Natural killer cell (primary cell): ENCODE measurements at regions of chr20 and their contacts with region 1.

Region 1: GRCh38 chr20:18566892-18567742 is at the start of gene SMIM26:
- DNase-seq: peak; percentile 90 to 97
- ATAC-seq: peak; percentile 98 to 99 (median 99)
- H3K4me3 ChIP-seq: peak within 1 kb of the TSS; percentile 59
- H3K4me3 Mint-ChIP-seq: peak within 1 kb of the TSS; percentile 98
- H3K27ac ChIP-seq: peak within 1 kb of the TSS; percentile 81
- H3K27ac Mint-ChIP-seq: peak within 1 kb of the TSS; percentile 94 to 97
- H3K4me1 ChIP-seq: peaks cover 11% of the 10 kb centered on the region
- H3K4me1 Mint-ChIP-seq: peaks cover 15 to 29% of the 10 kb centered on the region in 2 donors
- H3K27me3 ChIP-seq: no peaks in the 10 kb centered on the region
- H3K27me3 Mint-ChIP-seq: no peaks in the 10 kb centered on the region
- CTCF ChIP-seq: no peak
- total RNA-seq, gene SMIM26: 38.6 to 48.8 (median 40.5) TPM

Region 2: GRCh38 chr20:16671753-16672152 is 1895.4 kb before region 1 on chr20:
- intact Hi-C with region 1: no loop called
- DNase-seq: no peak
- ATAC-seq: no peak
- H3K4me3 ChIP-seq: no peak overlapping the region
- H3K4me3 Mint-ChIP-seq: no peak overlapping the region
- H3K27ac ChIP-seq: no peak overlapping the region
- H3K27ac Mint-ChIP-seq: no peak overlapping the region
- H3K4me1 ChIP-seq: no peaks in the 10 kb centered on the region
- H3K4me1 Mint-ChIP-seq: no peaks in the 10 kb centered on the region
- H3K27me3 ChIP-seq: no peaks in the 10 kb centered on the region
- H3K27me3 Mint-ChIP-seq: peaks cover 0 to 6% of the 10 kb centered on the region in 2 donors
- CTCF ChIP-seq: no peak

Region 3: DNA sequence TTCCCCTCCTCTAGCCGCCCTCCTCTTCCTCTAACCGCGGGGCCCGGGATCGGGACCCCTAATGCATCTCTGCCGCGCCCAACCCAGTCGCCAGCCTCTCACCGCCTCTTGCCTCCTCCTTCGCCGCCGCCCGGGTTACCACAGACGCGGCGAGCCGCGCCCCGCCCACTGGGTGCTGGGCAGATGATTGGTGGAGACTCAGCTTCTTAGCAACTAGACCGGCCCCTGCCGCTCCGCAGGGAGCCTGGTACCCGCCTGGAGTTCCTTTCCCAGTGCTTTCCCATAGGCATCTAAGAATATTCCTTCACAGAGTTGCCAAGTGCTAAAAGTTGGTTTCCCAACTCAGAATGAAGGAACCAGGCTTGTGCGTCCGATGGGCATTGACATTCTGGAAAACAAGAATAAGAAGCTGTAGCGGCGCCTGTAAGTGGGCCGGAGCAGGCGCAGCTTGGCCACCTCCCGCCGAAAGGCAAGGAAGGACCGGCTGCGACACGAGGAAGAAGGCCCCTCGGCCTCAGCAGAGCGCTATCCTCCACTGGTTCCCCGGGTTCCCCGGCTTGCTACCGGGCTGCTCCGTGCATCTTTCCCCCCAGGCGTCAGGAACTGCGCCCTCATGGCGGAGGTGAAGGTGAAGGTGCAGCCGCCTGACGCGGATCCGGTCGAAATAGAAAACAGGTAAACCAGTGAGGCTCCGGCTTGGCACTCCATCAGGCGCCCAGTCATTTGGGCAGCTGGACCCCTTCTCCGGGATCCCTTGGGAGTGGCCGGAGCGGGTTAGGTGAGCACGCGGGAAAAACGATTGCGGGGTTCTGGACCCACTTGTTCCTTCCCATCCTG is 100.0 kb before region 1 on chr20 and contains the starts of genes DZANK1 and POLR3F:
- intact Hi-C with region 1: loop called (anchors 1 kb)
- DNase-seq: peak; percentile 87 to 94
- ATAC-seq: peak; percentile 92 to 95 (median 94)
- H3K4me3 ChIP-seq: peak within 1 kb of the TSS; percentile 70
- H3K4me3 Mint-ChIP-seq: peak within 1 kb of the TSS; percentile 97
- H3K27ac ChIP-seq: peak within 1 kb of the TSS; percentile 84
- H3K27ac Mint-ChIP-seq: peak within 1 kb of the TSS; percentile 95 to 97
- H3K4me1 ChIP-seq: peaks cover 16% of the 10 kb centered on the region
- H3K4me1 Mint-ChIP-seq: peaks cover 21 to 28% of the 10 kb centered on the region in 2 donors
- H3K27me3 ChIP-seq: no peaks in the 10 kb centered on the region
- H3K27me3 Mint-ChIP-seq: no peaks in the 10 kb centered on the region
- CTCF ChIP-seq: no peak
- total RNA-seq, gene DZANK1: 2.7 to 5.7 (median 3.7) TPM
- total RNA-seq, gene POLR3F: 8.5 to 10.6 (median 8.8) TPM

Region 4: DNA sequence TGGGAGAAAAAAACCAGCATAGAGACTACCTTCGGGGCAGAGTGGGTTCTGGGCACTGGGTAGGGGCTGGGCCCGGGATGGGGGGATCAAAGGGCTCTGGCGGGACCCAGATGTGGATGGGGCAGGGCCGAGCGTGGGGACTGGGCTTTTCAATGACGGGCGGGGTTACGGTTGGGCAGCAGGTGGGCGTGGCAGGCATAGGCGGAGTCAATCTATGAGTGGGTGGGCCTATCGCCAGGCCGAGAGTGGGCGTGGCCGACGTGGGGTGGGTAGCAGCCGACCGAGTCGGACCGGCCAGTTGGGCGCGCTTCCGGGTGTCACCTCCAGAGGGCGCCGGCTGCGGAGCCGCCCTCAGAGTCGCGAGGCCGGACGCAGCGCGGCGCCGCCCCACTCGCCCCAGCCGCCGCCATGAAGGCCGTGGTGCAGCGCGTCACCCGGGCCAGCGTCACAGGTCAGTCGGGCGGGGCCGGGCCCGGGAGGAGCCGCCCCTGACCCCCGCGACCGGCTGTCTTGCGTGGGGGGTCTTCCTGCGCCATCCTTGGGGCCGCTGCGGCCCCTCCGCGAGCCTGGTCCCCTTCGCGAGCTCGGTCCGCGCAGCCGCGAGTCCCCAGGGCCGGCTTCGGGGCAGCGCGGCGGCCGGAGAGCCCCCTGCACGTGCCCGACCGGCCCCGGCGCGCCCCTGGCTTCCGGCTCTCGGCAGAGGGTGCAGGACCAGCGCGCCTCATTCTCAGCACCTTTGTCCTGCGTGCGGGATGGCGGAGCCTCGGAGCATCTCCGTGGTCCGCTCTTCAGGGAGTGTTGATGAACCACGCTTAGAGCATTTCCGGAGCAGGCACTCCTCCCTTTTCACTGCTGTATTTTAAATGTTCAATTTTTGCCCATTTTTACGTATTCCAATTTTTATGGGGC is 20.8 kb after region 1 on chr20 and contains the start of gene DTD1:
- intact Hi-C with region 1: loop called (anchors 1 kb)
- DNase-seq: peak; percentile 85 to 86
- ATAC-seq: peak; percentile 87 to 95 (median 88)
- H3K4me3 ChIP-seq: peak within 1 kb of the TSS; percentile 71
- H3K4me3 Mint-ChIP-seq: peak within 1 kb of the TSS; percentile 90
- H3K27ac ChIP-seq: peak within 1 kb of the TSS; percentile 54
- H3K27ac Mint-ChIP-seq: peak within 1 kb of the TSS; percentile 84 to 87
- H3K4me1 ChIP-seq: peaks cover 14% of the 10 kb centered on the region
- H3K4me1 Mint-ChIP-seq: peaks cover 25 to 26% of the 10 kb centered on the region in 2 donors
- H3K27me3 ChIP-seq: no peaks in the 10 kb centered on the region
- H3K27me3 Mint-ChIP-seq: peaks cover 0 to 6% of the 10 kb centered on the region in 2 donors
- CTCF ChIP-seq: peak; percentile 65
- total RNA-seq, gene DTD1: 23.4 to 28.4 (median 24.1) TPM